IMR-90 (cell line): ENCODE measurements at regions of chr6 and their contacts with region 1.

Region 1: DNA sequence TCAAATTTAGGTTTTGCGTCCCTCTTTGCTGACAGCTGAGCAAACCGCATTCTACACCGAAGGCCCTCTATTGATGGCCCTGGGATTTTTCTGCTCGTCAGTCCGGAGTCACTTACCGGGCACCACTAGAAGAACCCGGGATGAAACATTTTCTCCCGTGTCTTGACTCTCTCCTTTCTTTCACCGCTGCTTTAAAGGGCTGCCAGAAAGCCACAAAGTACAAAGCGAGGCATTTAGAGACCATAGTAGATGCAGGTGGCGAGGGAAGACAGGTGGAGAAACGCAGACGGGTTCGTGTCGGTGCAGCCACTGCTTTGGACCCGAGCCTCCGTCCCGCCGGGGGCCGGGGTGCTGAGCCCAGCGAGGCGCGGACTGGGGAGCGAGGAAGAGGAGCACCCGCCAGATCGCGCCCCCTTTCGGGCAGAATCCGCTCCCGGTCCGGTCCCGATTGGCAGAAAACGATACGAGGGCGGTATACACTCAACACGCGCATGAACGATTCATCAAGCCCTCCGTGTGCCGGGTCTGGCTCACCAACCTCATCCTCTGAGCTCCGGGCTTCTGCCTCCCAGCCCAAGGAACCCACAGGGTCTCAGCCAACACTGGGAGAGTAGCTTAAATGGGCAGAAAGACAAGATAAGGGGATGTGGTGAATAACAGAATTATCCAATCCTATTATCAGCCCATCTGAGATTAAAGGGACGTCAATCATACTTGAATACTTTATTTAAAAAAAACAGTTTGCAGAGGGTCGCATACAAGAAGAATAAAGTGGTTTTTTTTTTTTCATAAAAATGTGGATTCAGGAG is 84.9 kb downstream of the TRIM27 start:
- DNase-seq: peak; percentile 80
- ATAC-seq: peak; percentile 95
- H3K4me3 ChIP-seq: peak overlapping the region; percentile 65
- H3K27ac ChIP-seq: no peak overlapping the region
- H3K4me1 ChIP-seq: no peaks in the 10 kb centered on the region
- H3K27me3 ChIP-seq: no peaks in the 10 kb centered on the region
- CTCF ChIP-seq: peak; percentile 71
- POLR2A ChIP-seq: no peak
- RAD21 ChIP-seq: peak; percentile 38

Region 2: GRCh38 chr6:28729501-28730402 is 109.1 kb before region 1 on chr6:
- CTCF ChIA-PET with region 1: no interaction called
- POLR2A ChIA-PET with region 1: no interaction called
- dilution Hi-C with region 1: no loop called
- in situ Hi-C with region 1: no loop called
- intact Hi-C with region 1: loop called (anchors 1 kb)
- DNase-seq: no peak
- ATAC-seq: no peak
- H3K4me3 ChIP-seq: 0 out of 2 replicates have a peak overlapping the region, but pooled peaks have one; percentile 9
- H3K27ac ChIP-seq: no peak overlapping the region
- H3K4me1 ChIP-seq: no peaks in the 10 kb centered on the region
- H3K27me3 ChIP-seq: peaks cover 11% of the 10 kb centered on the region
- CTCF ChIP-seq: no peak
- POLR2A ChIP-seq: no peak
- RAD21 ChIP-seq: no peak

Region 3: GRCh38 chr6:28776269-28777146 is 62.3 kb before region 1 on chr6:
- CTCF ChIA-PET with region 1: no interaction called
- POLR2A ChIA-PET with region 1: no interaction called
- dilution Hi-C with region 1: no loop called
- in situ Hi-C with region 1: no loop called
- intact Hi-C with region 1: no loop called
- DNase-seq: no peak
- ATAC-seq: no peak
- H3K4me3 ChIP-seq: no peak overlapping the region
- H3K27ac ChIP-seq: no peak overlapping the region
- H3K4me1 ChIP-seq: no peaks in the 10 kb centered on the region
- H3K27me3 ChIP-seq: peaks cover 60% of the 10 kb centered on the region
- CTCF ChIP-seq: no peak
- POLR2A ChIP-seq: no peak
- RAD21 ChIP-seq: no peak

Region 4: GRCh38 chr6:28880894-28881780 is 42.3 kb after region 1 on chr6:
- CTCF ChIA-PET with region 1: no interaction called
- POLR2A ChIA-PET with region 1: no interaction called
- dilution Hi-C with region 1: no loop called
- in situ Hi-C with region 1: no loop called
- intact Hi-C with region 1: loop called (anchors 5 kb)
- DNase-seq: peak; percentile 75
- ATAC-seq: peak; percentile 98
- H3K4me3 ChIP-seq: peak overlapping the region; percentile 81
- H3K27ac ChIP-seq: 0 out of 2 replicates have a peak overlapping the region, but pooled peaks have one; percentile 23
- H3K4me1 ChIP-seq: no peaks in the 10 kb centered on the region
- H3K27me3 ChIP-seq: peaks cover 3% of the 10 kb centered on the region; the same call in 1 of the 2 replicates
- CTCF ChIP-seq: no peak
- POLR2A ChIP-seq: no peak
- RAD21 ChIP-seq: no peak

Region 5: DNA sequence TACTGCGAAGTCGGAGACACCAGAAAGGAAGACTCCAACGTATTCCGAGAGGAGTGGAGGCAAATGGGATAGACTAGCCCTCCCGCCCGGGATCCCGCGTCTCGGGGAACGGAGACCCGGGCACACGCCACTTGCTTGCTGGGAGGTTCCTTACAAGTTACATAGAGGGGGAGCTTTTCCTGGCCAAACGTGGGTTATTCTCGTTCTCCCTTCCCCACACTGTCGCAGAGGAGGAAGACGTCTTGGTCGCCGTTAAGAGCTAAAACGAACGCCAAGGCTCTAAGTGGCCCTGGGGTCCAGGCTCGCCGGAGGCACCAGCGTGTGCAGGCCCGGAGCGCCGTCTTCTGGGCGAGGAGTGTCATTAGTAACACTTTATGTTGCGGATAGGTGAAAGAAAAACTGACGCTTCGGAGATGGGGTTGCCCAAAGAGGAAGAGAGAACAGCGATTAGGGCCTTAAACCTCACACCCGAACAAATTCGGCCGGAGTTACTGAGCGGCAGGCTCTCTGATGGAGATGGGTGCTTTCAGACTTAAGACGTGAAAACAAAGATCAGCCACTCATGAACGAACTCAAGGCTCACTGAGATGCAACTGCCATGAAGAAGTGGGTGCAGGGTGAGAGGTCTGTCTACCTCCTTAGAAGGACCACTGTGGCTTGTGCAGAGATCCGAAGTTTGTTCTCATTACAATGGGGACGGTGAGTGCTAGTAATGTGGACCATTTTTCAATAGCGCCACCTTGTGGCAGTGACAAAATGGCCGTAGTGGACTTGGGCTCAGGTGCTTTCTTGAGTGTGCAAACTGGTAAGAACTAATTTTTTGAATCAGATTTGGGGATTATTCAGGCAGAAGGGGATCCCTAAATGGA is 178.0 kb after region 1 on chr6:
- CTCF ChIA-PET with region 1: interaction called, 7 read pairs
- POLR2A ChIA-PET with region 1: no interaction called
- dilution Hi-C with region 1: no loop called
- in situ Hi-C with region 1: loop called (anchors 5 kb)
- intact Hi-C with region 1: loop called (anchors 1 kb)
- DNase-seq: peak; percentile 76
- ATAC-seq: peak; percentile 97
- H3K4me3 ChIP-seq: peak overlapping the region; percentile 64
- H3K27ac ChIP-seq: no peak overlapping the region; the same call in 1 of the 2 replicates
- H3K4me1 ChIP-seq: no peaks in the 10 kb centered on the region
- H3K27me3 ChIP-seq: peaks cover 10% of the 10 kb centered on the region
- CTCF ChIP-seq: peak; percentile 78
- POLR2A ChIP-seq: no peak
- RAD21 ChIP-seq: peak; percentile 73

Region 6: DNA sequence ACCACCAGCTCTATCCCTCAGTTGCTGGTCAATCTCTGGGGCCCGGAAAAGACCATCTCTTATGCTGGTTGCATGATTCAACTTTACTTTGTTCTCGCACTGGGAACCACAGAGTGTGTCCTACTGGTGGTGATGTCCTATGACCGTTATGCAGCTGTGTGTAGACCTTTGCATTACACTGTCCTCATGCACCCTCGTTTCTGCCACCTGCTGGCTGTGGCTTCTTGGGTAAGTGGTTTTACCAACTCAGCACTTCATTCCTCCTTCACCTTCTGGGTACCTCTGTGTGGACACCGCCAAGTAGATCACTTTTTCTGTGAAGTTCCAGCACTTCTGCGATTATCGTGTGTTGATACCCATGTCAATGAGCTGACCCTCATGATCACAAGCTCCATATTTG is 273.3 kb after region 1 on chr6:
- CTCF ChIA-PET with region 1: no interaction called
- POLR2A ChIA-PET with region 1: no interaction called
- dilution Hi-C with region 1: no loop called
- in situ Hi-C with region 1: no loop called
- intact Hi-C with region 1: no loop called
- DNase-seq: no peak
- ATAC-seq: no peak
- H3K4me3 ChIP-seq: no peak overlapping the region
- H3K27ac ChIP-seq: no peak overlapping the region
- H3K4me1 ChIP-seq: no peaks in the 10 kb centered on the region
- H3K27me3 ChIP-seq: no peaks in the 10 kb centered on the region
- CTCF ChIP-seq: no peak
- POLR2A ChIP-seq: no peak
- RAD21 ChIP-seq: no peak